ENCODE measurements at regions of chr5 and their contacts with region 1.

Region 1: GRCh38 chr5:151150471-151151262 is 6.9 kb downstream of the ANXA6 start:
- DNase-seq: peak; percentile 39 to 93 (median 83)
- ATAC-seq: peak; percentile 89
- H3K4me3 ChIP-seq: peak overlapping the region; percentile 44
- H3K4me3 Mint-ChIP-seq: peak overlapping the region; percentile 70 to 97 (median 86)
- H3K27ac ChIP-seq: peak overlapping the region; percentile 92
- H3K27ac Mint-ChIP-seq: peak overlapping the region; percentile 91 to 99 (median 97)
- H3K4me1 ChIP-seq: peaks cover 93 to 99% of the 10 kb centered on the region in 2 donors
- H3K4me1 Mint-ChIP-seq: peaks cover 80 to 100% (median 96%) of the 10 kb centered on the region in 7 donors
- H3K27me3 ChIP-seq: no peaks in the 10 kb centered on the region
- H3K27me3 Mint-ChIP-seq: no peaks in the 10 kb centered on the region

Region 2: DNA sequence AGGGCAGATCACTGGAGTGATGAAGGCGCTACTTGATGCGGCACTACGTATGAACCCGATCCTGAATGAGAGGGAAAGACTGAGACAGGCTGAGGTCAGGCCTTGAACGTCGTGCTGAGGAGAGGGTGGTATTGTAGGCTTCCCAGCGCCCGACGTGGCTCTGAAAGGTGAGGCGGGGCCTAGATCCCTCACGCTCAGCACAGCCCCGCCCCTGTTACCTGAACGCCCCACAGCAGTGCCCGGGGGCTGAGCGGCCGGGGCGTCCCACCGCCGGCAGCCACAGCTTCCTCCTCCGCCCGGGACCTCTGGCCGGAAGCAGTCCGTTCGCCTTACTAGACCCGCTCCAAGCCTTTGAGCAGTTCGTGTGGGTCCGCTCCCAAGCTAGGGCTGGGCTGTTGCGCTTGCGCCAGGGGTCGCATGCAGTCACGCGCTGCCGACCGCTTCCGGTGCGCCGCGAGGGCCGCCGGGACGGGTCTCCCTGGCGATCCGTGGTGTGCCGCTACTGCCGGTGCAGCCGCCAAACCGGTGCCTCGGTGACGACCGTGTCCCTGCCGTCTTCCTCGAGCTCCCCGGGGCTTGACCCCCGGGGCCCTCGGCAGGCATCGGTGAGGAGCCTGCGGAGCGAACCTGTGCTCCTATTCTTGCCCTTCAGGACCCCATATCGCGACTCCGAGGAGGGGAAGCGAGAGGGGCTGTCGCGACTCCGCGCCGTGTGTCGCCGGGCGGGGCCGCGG is 1150.2 kb before region 1 on chr5 and contains the starts of genes HMGXB3 and TIGD6:
- CTCF ChIA-PET with region 1: no interaction called
- POLR2A ChIA-PET with region 1: no interaction called
- intact Hi-C with region 1: loop called in 1 of 2 experiments (anchors 2 kb)
- DNase-seq: peak; percentile 64 to 87 (median 74)
- ATAC-seq: peak; percentile 83
- H3K4me3 ChIP-seq: peak within 1 kb of the TSS; percentile 76
- H3K4me3 Mint-ChIP-seq: peak within 1 kb of the TSS; percentile 86 to 99 (median 93)
- H3K27ac ChIP-seq: peak within 1 kb of the TSS; percentile 80
- H3K27ac Mint-ChIP-seq: peak within 1 kb of the TSS; percentile 75 to 98 (median 94)
- H3K4me1 ChIP-seq: peaks cover 18 to 23% of the 10 kb centered on the region in 2 donors
- H3K4me1 Mint-ChIP-seq: peaks cover 33 to 55% (median 46%) of the 10 kb centered on the region in 7 donors
- H3K27me3 ChIP-seq: no peaks in the 10 kb centered on the region
- H3K27me3 Mint-ChIP-seq: no peaks in the 10 kb centered on the region
- total RNA-seq, gene HMGXB3: 27.2 to 40.6 (median 34.5) TPM
- total RNA-seq, gene TIGD6: 2.3 to 7.4 (median 2.8) TPM

Region 3: GRCh38 chr5:151020304-151021110 is 130.2 kb before region 1 on chr5 and contains the start of gene GPX3:
- CTCF ChIA-PET with region 1: no interaction called
- POLR2A ChIA-PET with region 1: no interaction called
- intact Hi-C with region 1: no loop called
- DNase-seq: peak in 7 of 9 donors; percentile 8 to 28 (median 13)
- ATAC-seq: peak; percentile 77
- H3K4me3 ChIP-seq: peak within 1 kb of the TSS; percentile 34
- H3K4me3 Mint-ChIP-seq: peak within 1 kb of the TSS; percentile 13 to 82 (median 76)
- H3K27ac ChIP-seq: no peak within 1 kb of the TSS
- H3K27ac Mint-ChIP-seq: peak within 1 kb of the TSS in 2 of 9 donors; percentile 1 to 32
- H3K4me1 ChIP-seq: peaks cover 0 to 6% of the 10 kb centered on the region in 2 donors
- H3K4me1 Mint-ChIP-seq: peaks cover 13 to 38% (median 22%) of the 10 kb centered on the region in 7 donors
- H3K27me3 ChIP-seq: no peaks in the 10 kb centered on the region
- H3K27me3 Mint-ChIP-seq: peaks cover 9 to 22% (median 17%) of the 10 kb centered on the region in 5 donors
- total RNA-seq, gene GPX3: 0.98 to 1.1 TPM in 2 of 5 experiments, not detected in the others

Region 4: DNA sequence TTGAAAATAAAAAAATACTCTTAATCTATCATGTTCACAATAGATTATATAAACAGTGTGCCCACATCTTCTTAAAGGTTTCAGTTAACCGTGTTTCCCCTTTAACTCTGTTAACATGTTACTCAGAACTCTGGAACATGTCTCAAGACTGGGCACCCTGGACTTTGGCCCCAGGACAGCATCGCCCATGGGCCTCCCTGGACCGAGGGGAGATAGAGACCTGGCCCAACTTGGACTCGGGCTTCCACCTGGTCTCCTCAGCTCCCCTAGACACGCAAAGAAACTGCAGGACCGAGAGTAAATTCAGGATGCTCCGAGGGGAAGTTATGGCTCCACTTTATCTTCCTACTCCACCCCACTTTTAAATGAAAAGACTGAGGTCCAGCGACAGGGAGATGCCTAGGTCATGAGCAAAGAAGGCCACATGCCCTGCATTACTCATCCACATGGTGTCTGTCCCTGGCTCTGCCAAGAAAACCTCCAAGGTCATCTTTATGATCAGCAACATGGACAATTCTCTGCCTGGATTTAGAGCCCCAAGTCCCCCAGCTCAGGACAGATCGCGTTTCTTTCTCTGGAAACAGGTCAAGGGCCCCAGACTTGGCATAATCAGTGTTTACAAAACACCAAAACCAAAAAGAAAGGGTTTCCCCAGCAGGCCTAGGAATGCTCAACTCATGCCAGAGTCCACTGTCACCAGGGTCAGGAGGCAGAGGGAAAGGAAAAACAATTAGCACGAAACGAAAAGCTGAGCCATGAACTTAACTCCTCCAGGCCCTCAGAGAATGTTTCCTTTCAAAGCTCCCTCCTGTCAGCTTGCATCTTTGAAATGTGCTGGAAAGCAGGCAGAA is 112.9 kb before region 1 on chr5:
- CTCF ChIA-PET with region 1: no interaction called
- POLR2A ChIA-PET with region 1: no interaction called
- intact Hi-C with region 1: no loop called
- DNase-seq: no peak
- ATAC-seq: no peak
- H3K4me3 ChIP-seq: no peak overlapping the region
- H3K4me3 Mint-ChIP-seq: no peak overlapping the region
- H3K27ac ChIP-seq: no peak overlapping the region
- H3K27ac Mint-ChIP-seq: peak overlapping the region in 1 of 9 donors; percentile 46
- H3K4me1 ChIP-seq: no peaks in the 10 kb centered on the region
- H3K4me1 Mint-ChIP-seq: peaks cover 0 to 12% (median 0%) of the 10 kb centered on the region in 7 donors
- H3K27me3 ChIP-seq: no peaks in the 10 kb centered on the region
- H3K27me3 Mint-ChIP-seq: no peaks in the 10 kb centered on the region

Region 5: DNA sequence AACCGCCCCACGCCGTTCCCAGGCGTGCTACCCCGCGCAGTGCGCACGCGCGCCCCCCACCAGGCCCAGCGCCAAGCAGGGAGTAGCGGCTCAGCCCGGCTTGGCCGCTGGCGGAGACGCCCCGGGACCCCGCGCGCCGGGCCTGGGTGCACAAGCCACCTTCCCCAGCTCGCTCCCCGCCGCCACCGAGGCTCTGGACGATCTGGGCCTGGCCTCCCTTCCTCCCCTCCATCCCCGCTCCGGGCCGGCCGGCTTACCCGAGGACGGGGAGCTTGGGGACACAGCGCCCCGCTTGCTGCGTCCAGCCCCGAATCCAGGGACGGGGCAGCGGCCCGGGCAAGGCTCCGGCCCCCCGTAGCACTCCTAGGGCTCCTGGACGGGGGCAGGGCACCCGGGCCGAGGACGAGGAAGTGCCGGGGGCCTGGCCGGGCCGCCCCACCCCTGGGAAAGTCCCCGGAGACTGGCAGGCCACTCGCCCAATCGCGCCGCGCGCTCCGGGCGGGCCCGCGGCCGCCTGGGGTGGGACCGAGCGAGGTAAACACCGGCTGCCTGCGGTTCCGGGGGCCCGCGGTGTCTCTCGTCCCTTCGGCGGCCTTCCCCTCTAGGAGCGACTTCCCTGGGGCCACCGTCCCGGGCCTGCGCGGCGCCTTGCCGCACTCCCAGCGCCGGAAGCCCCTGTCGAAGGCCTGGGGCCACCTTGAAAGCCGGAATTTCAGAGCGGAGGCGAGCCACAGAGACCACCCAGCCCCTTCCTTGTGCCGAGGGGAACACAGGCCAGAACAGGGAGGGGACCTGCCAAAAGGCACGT is 69.8 kb before region 1 on chr5 and contains the start of gene TNIP1:
- CTCF ChIA-PET with region 1: no interaction called
- POLR2A ChIA-PET with region 1: no interaction called
- intact Hi-C with region 1: loop called (anchors 1 to 2 kb)
- DNase-seq: peak; percentile 86 to 99 (median 90)
- ATAC-seq: peak; percentile 94
- H3K4me3 ChIP-seq: peak within 1 kb of the TSS; percentile 86
- H3K4me3 Mint-ChIP-seq: peak within 1 kb of the TSS; percentile 85 to 95 (median 90)
- H3K27ac ChIP-seq: peak within 1 kb of the TSS; percentile 96
- H3K27ac Mint-ChIP-seq: peak within 1 kb of the TSS; percentile 86 to 95 (median 91)
- H3K4me1 ChIP-seq: peaks cover 37 to 69% of the 10 kb centered on the region in 2 donors
- H3K4me1 Mint-ChIP-seq: peaks cover 53 to 84% (median 73%) of the 10 kb centered on the region in 7 donors
- H3K27me3 ChIP-seq: no peaks in the 10 kb centered on the region
- H3K27me3 Mint-ChIP-seq: no peaks in the 10 kb centered on the region
- total RNA-seq, gene TNIP1: 124 to 234 (median 131) TPM

Region 6: GRCh38 chr5:151094054-151094851 is 56.4 kb before region 1 on chr5:
- CTCF ChIA-PET with region 1: interaction called, 3 read pairs
- POLR2A ChIA-PET with region 1: no interaction called
- intact Hi-C with region 1: loop called in 1 of 2 experiments (anchors 2 kb)
- DNase-seq: peak in 2 of 9 donors; percentile 31 to 73
- ATAC-seq: peak; percentile 74
- H3K4me3 ChIP-seq: no peak overlapping the region
- H3K4me3 Mint-ChIP-seq: peak overlapping the region; percentile 7 to 73 (median 47)
- H3K27ac ChIP-seq: peak overlapping the region; percentile 26
- H3K27ac Mint-ChIP-seq: peak overlapping the region; percentile 38 to 90 (median 84)
- H3K4me1 ChIP-seq: peaks cover 31 to 53% of the 10 kb centered on the region in 2 donors
- H3K4me1 Mint-ChIP-seq: peaks cover 51 to 86% (median 69%) of the 10 kb centered on the region in 7 donors
- H3K27me3 ChIP-seq: no peaks in the 10 kb centered on the region
- H3K27me3 Mint-ChIP-seq: no peaks in the 10 kb centered on the region

Region 7: GRCh38 chr5:151134238-151134637 is 16.4 kb before region 1 on chr5:
- CTCF ChIA-PET with region 1: interaction called, 86 read pairs
- POLR2A ChIA-PET with region 1: interaction called, 760 read pairs
- intact Hi-C with region 1: loop called in 1 of 2 experiments (anchors 1 kb)
- DNase-seq: no peak
- ATAC-seq: no peak
- H3K4me3 ChIP-seq: no peak overlapping the region
- H3K4me3 Mint-ChIP-seq: no peak overlapping the region
- H3K27ac ChIP-seq: peak overlapping the region; percentile 37
- H3K27ac Mint-ChIP-seq: peak overlapping the region in 8 of 9 donors; percentile 53 to 99 (median 84)
- H3K4me1 ChIP-seq: peaks cover 21 to 50% of the 10 kb centered on the region in 2 donors
- H3K4me1 Mint-ChIP-seq: peaks cover 65 to 98% (median 85%) of the 10 kb centered on the region in 7 donors
- H3K27me3 ChIP-seq: no peaks in the 10 kb centered on the region
- H3K27me3 Mint-ChIP-seq: no peaks in the 10 kb centered on the region